ENCODE measurements at regions of chrX and their contacts with region 1.

Region 1: DNA sequence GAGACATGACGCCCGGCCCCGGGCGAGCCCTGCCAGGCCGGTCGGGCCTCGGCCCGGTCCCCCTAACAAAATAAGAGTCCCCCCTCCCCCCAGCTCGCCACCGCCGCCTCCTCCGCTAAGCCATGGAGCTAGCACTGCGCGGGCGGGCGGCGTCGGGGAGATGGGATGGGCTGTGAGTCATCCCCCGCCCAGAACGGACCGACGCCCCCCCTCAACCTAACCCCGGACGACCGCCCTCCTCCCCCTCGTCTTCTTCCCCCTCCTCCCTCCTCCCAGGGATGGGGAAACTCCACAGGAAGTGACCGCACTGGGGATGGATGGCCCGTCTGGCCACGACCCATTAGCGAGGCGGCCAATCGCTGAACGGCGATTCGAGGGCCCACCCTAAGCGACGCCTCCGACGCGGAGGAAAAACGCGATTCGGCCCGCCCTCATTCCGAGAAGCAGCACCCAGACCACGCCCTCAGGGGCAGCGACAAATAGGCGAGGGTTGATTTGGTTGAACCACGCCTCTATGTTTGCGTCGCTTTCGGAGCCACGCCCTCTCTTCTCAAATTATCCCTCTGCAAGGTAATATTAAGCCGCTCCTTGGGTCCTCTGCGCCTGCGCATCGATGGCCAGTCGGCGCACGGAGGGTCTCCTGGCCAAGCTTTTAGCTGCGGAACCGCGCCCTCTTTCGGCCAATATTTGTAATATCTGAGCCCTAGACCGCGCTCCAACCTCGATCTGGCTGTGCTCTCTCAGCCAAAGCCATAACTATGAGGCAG is at the start of gene TFE3:
- DNase-seq: peak; percentile 88 to 96
- H3K4me3 ChIP-seq: peak within 1 kb of the TSS; percentile 73 to 95 (median 86)
- H3K27ac ChIP-seq: peak within 1 kb of the TSS; percentile 81
- H3K4me1 ChIP-seq: peaks cover 6 to 13% (median 7%) of the 10 kb centered on the region in 4 experiments
- H3K27me3 ChIP-seq: no peaks in the 10 kb centered on the region
- CTCF ChIP-seq: peak; percentile 43 to 61 (median 51)
- EP300 ChIP-seq: no peak
- POLR2A ChIP-seq: no peak
- RAD21 ChIP-seq: peak; percentile 62 to 66
- total RNA-seq, gene TFE3: 52.9 and 55.2 TPM in 2 replicates

Region 2: GRCh38 chrX:48972220-48973167 is 70.9 kb before region 1 on chrX:
- CTCF ChIA-PET with region 1: interaction called, 6 read pairs
- POLR2A ChIA-PET with region 1: interaction called, 20 read pairs
- DNase-seq: peak in 1 of 2 experiments; percentile 54
- H3K4me3 ChIP-seq: peak overlapping the region; percentile 39 to 70 (median 50)
- H3K27ac ChIP-seq: no peak overlapping the region; the same call in 1 of the 2 replicates
- H3K4me1 ChIP-seq: peaks cover 0 to 3% (median 0%) of the 10 kb centered on the region in 4 experiments; a peak in 1 of 7 replicates
- H3K27me3 ChIP-seq: no peaks in the 10 kb centered on the region
- CTCF ChIP-seq: peak in 2 of 3 experiments; percentile 39 to 70; a peak in 3 of 4 replicates
- EP300 ChIP-seq: no peak
- POLR2A ChIP-seq: peak in 1 of 2 experiments; percentile 59; a peak in 2 of 3 replicates
- RAD21 ChIP-seq: peak in 1 of 2 experiments; percentile 22; a peak in 1 of 4 replicates

Region 3: GRCh38 chrX:48996969-48997368 is 46.4 kb before region 1 on chrX:
- CTCF ChIA-PET with region 1: no interaction called
- POLR2A ChIA-PET with region 1: interaction called, 24 read pairs
- DNase-seq: peak in 1 of 2 experiments; percentile 45
- H3K4me3 ChIP-seq: no peak overlapping the region
- H3K27ac ChIP-seq: no peak overlapping the region
- H3K4me1 ChIP-seq: peaks cover 0 to 3% (median 0%) of the 10 kb centered on the region in 4 experiments; a peak in 1 of 7 replicates
- H3K27me3 ChIP-seq: no peaks in the 10 kb centered on the region
- CTCF ChIP-seq: no peak
- EP300 ChIP-seq: no peak
- POLR2A ChIP-seq: no peak
- RAD21 ChIP-seq: no peak

Region 4: DNA sequence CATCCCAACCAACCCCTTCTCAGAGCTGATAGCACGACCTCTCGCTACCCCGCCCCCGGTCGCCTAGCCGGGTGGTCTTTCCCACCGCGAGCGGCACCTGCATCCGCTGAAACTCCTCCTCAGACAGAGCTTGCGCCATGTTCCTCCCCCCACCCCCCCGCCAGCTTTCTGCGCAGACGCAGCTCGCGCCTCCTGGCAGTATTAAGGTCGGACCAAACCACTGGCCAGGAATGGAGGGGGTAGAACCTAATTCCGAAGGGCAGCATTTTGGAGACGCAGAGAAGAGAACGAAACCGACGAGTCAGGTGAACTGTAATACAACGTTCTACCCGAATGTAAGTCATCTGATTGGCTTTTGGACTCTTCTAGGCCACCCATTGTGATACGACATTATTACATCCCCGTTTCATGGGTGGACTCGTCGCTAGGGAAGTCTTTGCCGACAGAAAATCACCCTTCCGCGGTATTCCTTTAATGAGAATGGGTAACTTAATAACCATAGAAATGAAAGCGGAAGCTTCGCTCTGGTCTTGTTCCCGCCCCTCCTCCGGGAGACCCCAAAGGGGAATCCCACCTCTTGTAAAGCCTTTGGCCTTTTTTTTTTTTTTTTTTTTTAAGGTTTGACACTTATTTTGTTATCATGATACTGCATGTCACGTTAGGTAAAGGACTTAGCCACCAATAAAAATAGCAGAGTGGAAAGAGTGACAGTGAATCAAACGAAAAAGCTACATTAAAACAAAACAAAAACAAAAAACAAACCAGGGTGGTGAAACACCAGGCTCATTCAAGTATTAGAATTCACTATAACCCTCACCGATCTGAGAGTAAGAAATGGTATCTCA is 41.1 kb before region 1 on chrX and contains the start of gene GRIPAP1:
- CTCF ChIA-PET with region 1: no interaction called
- POLR2A ChIA-PET with region 1: interaction called, 24 read pairs
- DNase-seq: peak; percentile 64 to 77
- H3K4me3 ChIP-seq: peak within 1 kb of the TSS; percentile 87 to 100 (median 98)
- H3K27ac ChIP-seq: peak within 1 kb of the TSS; percentile 96
- H3K4me1 ChIP-seq: peaks cover 0 to 3% (median 0%) of the 10 kb centered on the region in 4 experiments; a peak in 1 of 7 replicates
- H3K27me3 ChIP-seq: no peaks in the 10 kb centered on the region
- CTCF ChIP-seq: no peak
- EP300 ChIP-seq: peak in 1 of 2 experiments; percentile 95; a peak in 2 of 3 replicates
- POLR2A ChIP-seq: peak; percentile 49; a peak in 2 of 3 replicates
- RAD21 ChIP-seq: no peak
- total RNA-seq, gene GRIPAP1: 44.5 and 55.9 TPM in 2 replicates

Region 5: DNA sequence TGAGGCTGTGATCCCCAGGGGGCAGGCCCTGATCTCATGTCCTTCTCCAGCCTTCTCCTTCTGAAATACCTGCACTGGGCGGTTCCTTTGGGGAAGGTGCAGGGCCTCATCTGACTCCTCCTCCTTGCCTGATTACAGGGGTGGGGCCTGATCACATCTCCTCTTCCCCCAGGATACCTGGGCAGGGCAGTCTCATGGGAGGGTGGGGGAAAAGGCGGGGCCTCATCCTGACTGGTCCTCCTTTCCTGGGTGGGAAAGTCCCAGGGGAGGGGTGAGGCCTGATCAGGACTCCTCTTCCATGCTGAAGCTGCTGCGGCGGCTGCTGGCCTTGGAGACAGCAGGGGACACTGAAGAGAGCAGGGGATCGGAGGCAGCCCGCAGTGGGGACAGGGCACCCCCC is 13.5 kb before region 1 on chrX:
- CTCF ChIA-PET with region 1: interaction called, 3 read pairs
- POLR2A ChIA-PET with region 1: interaction called, 11 read pairs
- DNase-seq: no peak
- H3K4me3 ChIP-seq: no peak overlapping the region
- H3K27ac ChIP-seq: peak overlapping the region; percentile 25; the same call in 1 of the 2 replicates
- H3K4me1 ChIP-seq: peaks cover 0 to 6% (median 2%) of the 10 kb centered on the region in 4 experiments; a peak in 2 of 7 replicates
- H3K27me3 ChIP-seq: no peaks in the 10 kb centered on the region
- CTCF ChIP-seq: no peak
- EP300 ChIP-seq: no peak
- POLR2A ChIP-seq: no peak
- RAD21 ChIP-seq: no peak

Measured in H1 (cell line).